ENCODE measurements at regions of chr7 and their contacts with region 1.

Region 1: DNA sequence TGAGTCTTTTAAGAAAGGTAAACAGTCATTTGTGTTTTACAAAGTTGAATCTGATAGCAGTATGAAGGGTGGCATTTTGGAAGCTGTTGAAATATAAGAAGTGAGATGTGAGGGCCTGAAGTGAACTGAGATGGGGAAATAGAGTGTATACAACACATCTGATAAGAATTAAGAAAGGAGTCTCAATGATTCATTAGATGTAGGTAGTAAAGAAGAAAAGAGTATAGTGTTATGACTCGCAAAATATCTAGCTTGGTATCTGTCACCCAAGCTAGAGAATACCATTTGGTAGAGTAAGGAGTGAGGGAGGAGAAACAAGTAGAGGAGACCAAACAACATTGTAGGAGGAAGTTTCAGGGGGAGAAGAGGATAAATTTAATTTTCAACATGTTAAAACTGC is 5.3 kb downstream of the PTPN12 start:
- DNase-seq: no peak
- ATAC-seq: peak; percentile 2; the same call in 1 of the 3 replicates
- H3K4me3 ChIP-seq: no peak overlapping the region
- H3K27ac ChIP-seq: no peak overlapping the region
- H3K4me1 ChIP-seq: peaks cover 12% of the 10 kb centered on the region
- H3K27me3 ChIP-seq: no peaks in the 10 kb centered on the region
- CTCF ChIP-seq: no peak
- EP300 ChIP-seq: no peak
- POLR2A ChIP-seq: no peak
- RAD21 ChIP-seq: no peak

Region 2: DNA sequence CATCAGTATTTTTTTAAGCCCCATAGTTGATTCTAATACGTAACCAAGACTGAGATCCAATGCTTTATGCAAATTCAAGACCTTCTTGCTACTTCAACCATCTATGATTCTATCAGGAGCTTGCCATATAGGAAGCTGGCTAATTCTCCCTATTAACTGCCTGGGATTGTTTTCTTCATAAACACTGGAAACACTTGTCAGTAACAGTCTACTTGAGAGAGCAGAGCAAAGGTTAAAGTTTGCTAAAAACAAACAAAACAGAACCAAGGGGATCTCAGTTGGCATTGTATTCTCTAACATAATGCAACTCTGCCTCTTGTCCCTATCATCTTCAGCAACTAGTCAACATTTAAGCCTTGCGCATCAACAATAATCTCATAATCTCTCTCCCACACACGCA is 26.3 kb before region 1 on chr7:
- CTCF ChIA-PET with region 1: no interaction called
- POLR2A ChIA-PET with region 1: no interaction called
- RAD21 ChIA-PET with region 1: no interaction called
- SMC1A ChIA-PET with region 1: no interaction called
- in situ Hi-C with region 1: no loop called
- intact Hi-C with region 1: no loop called
- DNase-seq: no peak
- ATAC-seq: no peak
- H3K4me3 ChIP-seq: no peak overlapping the region
- H3K27ac ChIP-seq: no peak overlapping the region
- H3K4me1 ChIP-seq: no peaks in the 10 kb centered on the region
- H3K27me3 ChIP-seq: no peaks in the 10 kb centered on the region
- CTCF ChIP-seq: no peak
- EP300 ChIP-seq: no peak
- POLR2A ChIP-seq: no peak
- RAD21 ChIP-seq: no peak

Region 3: GRCh38 chr7:77569514-77570232 is 27.3 kb after region 1 on chr7:
- CTCF ChIA-PET with region 1: interaction called, 3 read pairs
- POLR2A ChIA-PET with region 1: interaction called, 8 read pairs
- RAD21 ChIA-PET with region 1: interaction called, 12 read pairs
- SMC1A ChIA-PET with region 1: interaction called, 58 read pairs
- in situ Hi-C with region 1: no loop called
- intact Hi-C with region 1: no loop called
- DNase-seq: no peak
- ATAC-seq: no peak; the same call in 2 of the 3 replicates
- H3K4me3 ChIP-seq: no peak overlapping the region
- H3K27ac ChIP-seq: peak overlapping the region; percentile 24
- H3K4me1 ChIP-seq: peaks cover 11% of the 10 kb centered on the region
- H3K27me3 ChIP-seq: no peaks in the 10 kb centered on the region
- CTCF ChIP-seq: no peak
- EP300 ChIP-seq: no peak
- POLR2A ChIP-seq: no peak
- RAD21 ChIP-seq: no peak